AG04450 (cell line): ENCODE measurements at regions of chr7 and their contacts with region 1.

Region 1: GRCh38 chr7:129163875-129164544 is 19.5 kb downstream of the TSPAN33 start:
- DNase-seq: peak; percentile 48
- H3K4me3 ChIP-seq: no peak overlapping the region
- H3K27ac ChIP-seq: no peak overlapping the region
- H3K27me3 ChIP-seq: peaks cover 19% of the 10 kb centered on the region
- CTCF ChIP-seq: peak; percentile 83

Region 2: DNA sequence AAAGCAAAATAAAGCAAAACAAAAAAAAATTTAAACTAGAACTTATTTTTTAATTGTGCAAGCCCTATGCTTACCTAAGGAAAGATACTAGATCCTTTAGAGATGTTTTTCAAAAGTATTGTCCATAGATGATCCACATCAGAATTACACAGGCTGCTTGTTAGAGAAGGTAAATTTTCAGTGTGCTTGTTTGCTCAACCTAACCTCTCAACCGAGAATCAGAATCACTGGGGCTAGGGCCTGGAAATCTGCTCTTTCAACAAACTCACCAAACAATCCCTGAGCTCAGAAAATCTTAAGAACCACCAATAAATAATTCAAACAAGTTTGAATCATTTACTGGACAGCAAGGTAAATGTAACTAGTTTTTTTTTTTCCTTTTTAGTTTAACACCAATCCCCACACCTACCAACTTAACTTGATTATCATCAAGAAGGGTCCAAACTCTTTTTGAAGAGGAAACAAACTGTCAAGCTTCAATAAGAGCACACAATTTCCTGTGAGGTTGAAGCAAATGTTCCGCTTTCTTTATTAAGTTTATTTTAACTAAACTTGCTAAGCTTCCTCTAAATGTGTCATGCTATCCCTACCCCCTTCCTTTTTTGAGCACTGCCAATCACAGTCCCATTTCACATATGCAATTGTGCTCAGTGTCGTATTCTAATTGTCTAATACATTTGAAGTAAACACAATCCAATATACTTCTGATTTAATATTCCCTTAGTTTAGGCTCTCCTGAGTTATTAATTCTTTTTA is 26.9 kb before region 1 on chr7:
- CTCF ChIA-PET with region 1: interaction called, 18 read pairs
- POLR2A ChIA-PET with region 1: no interaction called
- DNase-seq: no peak
- H3K4me3 ChIP-seq: no peak overlapping the region
- H3K27ac ChIP-seq: no peak overlapping the region
- H3K27me3 ChIP-seq: peaks cover 8% of the 10 kb centered on the region
- CTCF ChIP-seq: no peak

Region 3: DNA sequence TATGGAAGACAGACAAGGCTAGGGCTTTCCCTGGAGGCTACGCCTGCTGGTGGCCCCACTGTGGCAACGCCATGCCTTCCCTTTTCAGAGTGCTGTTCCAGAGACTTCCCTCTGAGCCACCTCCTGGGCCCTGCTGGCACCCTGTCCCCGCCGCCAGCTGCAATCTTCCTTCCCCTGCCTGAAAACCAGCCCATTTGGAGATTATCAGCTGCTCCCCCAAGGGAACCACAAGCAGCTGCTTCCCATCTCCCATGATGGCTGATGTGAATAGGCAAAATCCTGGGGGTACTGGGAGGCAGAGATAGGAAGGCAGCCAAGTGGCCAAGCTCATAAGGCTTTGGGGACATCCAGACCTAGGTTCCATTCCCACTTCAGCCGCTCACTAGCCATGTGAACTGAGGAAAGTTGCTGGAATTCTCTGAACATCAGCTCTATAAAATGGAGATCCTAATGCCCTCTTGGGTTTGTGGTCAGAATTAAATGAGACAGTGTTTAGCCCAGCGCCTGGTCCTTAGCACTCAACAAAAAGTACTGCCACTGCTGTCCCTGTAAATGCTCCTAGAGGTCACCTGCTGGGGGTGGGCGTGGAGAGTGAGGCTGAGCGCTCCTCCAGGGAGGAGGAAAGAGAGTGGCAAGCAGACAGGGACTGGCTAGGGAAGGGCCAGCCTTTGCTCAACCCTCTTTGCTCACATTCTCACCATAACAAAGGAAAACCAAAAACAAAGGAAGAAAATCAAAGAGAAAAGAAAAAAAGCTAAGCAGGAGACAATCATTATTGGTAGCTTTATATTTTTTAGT is 13.6 kb before region 1 on chr7:
- CTCF ChIA-PET with region 1: interaction called, 21 read pairs
- POLR2A ChIA-PET with region 1: no interaction called
- DNase-seq: no peak
- H3K4me3 ChIP-seq: no peak overlapping the region
- H3K27ac ChIP-seq: no peak overlapping the region
- H3K27me3 ChIP-seq: peaks cover 56% of the 10 kb centered on the region
- CTCF ChIP-seq: no peak

Region 4: GRCh38 chr7:129193892-129194291 is 29.9 kb after region 1 on chr7:
- CTCF ChIA-PET with region 1: interaction called, 15 read pairs
- POLR2A ChIA-PET with region 1: interaction called, 3 read pairs
- DNase-seq: no peak
- H3K4me3 ChIP-seq: no peak overlapping the region
- H3K27ac ChIP-seq: no peak overlapping the region
- H3K27me3 ChIP-seq: no peaks in the 10 kb centered on the region
- CTCF ChIP-seq: no peak

Region 5: GRCh38 chr7:129210256-129210988 is 46.4 kb after region 1 on chr7:
- CTCF ChIA-PET with region 1: interaction called, 188 read pairs
- POLR2A ChIA-PET with region 1: interaction called, 10 read pairs
- DNase-seq: no peak
- H3K4me3 ChIP-seq: no peak overlapping the region
- H3K27ac ChIP-seq: no peak overlapping the region
- H3K27me3 ChIP-seq: no peaks in the 10 kb centered on the region
- CTCF ChIP-seq: peak; percentile 82

Region 6: DNA sequence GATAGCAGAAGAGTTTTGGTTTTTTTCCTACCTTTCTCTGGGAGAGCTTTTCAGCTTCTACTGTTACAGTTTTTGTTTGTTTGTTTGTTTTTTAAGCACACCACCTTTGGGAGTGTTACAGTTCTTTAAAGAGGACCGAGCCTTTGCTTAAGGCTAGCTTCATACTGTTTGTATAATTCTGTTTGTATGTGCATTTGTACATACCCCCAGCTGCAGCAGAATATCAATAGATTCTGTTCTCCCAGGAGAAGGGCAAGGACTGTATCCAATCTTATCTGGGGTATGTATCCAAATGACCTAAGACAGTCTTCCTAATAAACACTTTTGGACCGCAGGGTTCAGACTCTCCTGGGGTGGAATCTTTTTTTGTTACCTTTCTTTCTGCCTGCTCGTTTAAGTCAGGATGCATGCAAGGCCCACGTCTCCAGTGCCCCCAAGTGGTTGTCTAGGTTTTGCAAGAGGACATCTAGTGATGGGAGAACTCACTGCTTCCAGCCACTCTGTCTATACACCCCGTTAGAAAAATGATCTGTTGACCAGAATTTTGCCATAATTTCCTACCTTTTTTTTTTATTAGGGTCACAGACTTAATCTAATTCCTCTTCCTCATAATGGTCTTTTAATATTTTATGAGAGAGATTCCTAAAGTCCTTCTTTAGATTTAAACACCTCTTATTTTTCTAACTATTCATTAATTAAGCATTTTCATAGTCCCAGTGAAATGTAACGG is 471.5 kb after region 1 on chr7:
- CTCF ChIA-PET with region 1: no interaction called
- POLR2A ChIA-PET with region 1: no interaction called
- DNase-seq: peak; percentile 54
- H3K4me3 ChIP-seq: no peak overlapping the region
- H3K27ac ChIP-seq: no peak overlapping the region
- H3K27me3 ChIP-seq: no peaks in the 10 kb centered on the region
- CTCF ChIP-seq: peak; percentile 97